ENCODE measurements at regions of chr1 and their contacts with region 1.

Region 1: GRCh38 chr1:28736450-28737306 is at the start of gene YTHDF2:
- DNase-seq: peak; percentile 82
- H3K4me3 ChIP-seq: peak within 1 kb of the TSS; percentile 77
- H3K27ac ChIP-seq: peak within 1 kb of the TSS; percentile 87
- H3K27me3 ChIP-seq: no peaks in the 10 kb centered on the region
- CTCF ChIP-seq: peak; percentile 89
- polyA plus RNA-seq, gene YTHDF2: 73.6 and 85.1 TPM in 2 replicates

Region 2: GRCh38 chr1:28648474-28649198 is 88.0 kb before region 1 on chr1 and contains the start of gene RNU11:
- CTCF ChIA-PET with region 1: interaction called, 9 read pairs
- POLR2A ChIA-PET with region 1: interaction called, 39 read pairs
- DNase-seq: peak; percentile 98
- H3K4me3 ChIP-seq: peak within 1 kb of the TSS; percentile 57
- H3K27ac ChIP-seq: peak within 1 kb of the TSS; percentile 89
- H3K27me3 ChIP-seq: no peaks in the 10 kb centered on the region
- CTCF ChIP-seq: no peak
- polyA plus RNA-seq, gene RNU11: not detected in 2 replicates

Region 3: GRCh38 chr1:28703629-28704028 is 33.0 kb before region 1 on chr1:
- CTCF ChIA-PET with region 1: interaction called, 20 read pairs
- POLR2A ChIA-PET with region 1: interaction called, 8 read pairs
- DNase-seq: no peak
- H3K4me3 ChIP-seq: no peak overlapping the region
- H3K27ac ChIP-seq: no peak overlapping the region
- H3K27me3 ChIP-seq: no peaks in the 10 kb centered on the region
- CTCF ChIP-seq: no peak

Region 4: GRCh38 chr1:28751315-28752060 is 14.8 kb after region 1 on chr1:
- CTCF ChIA-PET with region 1: interaction called, 45 read pairs
- POLR2A ChIA-PET with region 1: interaction called, 16 read pairs
- DNase-seq: no peak
- H3K4me3 ChIP-seq: no peak overlapping the region
- H3K27ac ChIP-seq: no peak overlapping the region
- H3K27me3 ChIP-seq: no peaks in the 10 kb centered on the region
- CTCF ChIP-seq: no peak

Region 5: DNA sequence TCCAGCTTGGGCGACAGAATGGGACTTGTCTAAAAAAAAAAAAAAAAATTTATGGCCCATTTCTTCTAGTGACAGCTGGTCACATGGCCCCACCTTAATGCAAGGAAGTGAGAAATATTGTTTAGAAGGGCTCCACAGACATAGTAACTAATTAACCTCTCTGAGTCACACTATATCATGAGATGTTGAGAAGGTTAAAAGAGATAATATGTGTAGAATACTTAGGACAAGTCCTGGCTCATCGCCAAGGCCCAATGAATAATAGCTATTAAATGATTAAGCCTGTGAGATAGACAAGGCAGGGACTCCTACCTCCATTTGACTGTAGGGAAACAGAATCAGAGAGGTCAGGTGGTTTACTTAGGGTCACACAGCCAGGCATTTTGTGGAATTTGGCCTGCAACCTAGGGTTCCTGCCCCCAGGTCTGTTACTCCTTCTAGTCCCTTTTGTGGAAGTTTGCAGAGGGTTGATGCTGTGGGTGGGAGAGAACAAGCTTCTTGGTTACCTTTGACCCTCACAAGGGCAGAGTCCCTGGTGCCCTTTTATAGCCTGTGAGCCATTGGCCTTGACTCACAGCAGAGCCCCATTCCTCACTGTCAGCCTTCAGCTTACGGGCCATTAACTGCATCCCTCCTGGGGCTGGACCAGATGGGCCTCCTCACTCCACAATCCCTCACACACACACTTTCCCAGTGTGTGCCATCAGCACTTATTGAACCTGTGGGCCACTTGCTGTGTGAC is 123.8 kb after region 1 on chr1:
- CTCF ChIA-PET with region 1: interaction called, 11 read pairs
- POLR2A ChIA-PET with region 1: no interaction called
- DNase-seq: no peak
- H3K4me3 ChIP-seq: no peak overlapping the region
- H3K27ac ChIP-seq: no peak overlapping the region
- H3K27me3 ChIP-seq: peaks cover 26% of the 10 kb centered on the region
- CTCF ChIP-seq: no peak

Measured in AG04450 (cell line).